ENCODE measurements at regions of chr19 and their contacts with region 1.

Region 1: GRCh38 chr19:40542202-40542859 is 34.3 kb upstream of the SHKBP1 start:
- H3K4me3 Mint-ChIP-seq: no peak overlapping the region
- H3K27ac Mint-ChIP-seq: no peak overlapping the region
- H3K4me1 Mint-ChIP-seq: no peaks in the 10 kb centered on the region
- H3K27me3 Mint-ChIP-seq: peaks cover 47% of the 10 kb centered on the region

Region 2: GRCh38 chr19:40523322-40524047 is 18.8 kb before region 1 on chr19:
- intact Hi-C with region 1: no loop called
- H3K4me3 Mint-ChIP-seq: no peak overlapping the region
- H3K27ac Mint-ChIP-seq: no peak overlapping the region
- H3K4me1 Mint-ChIP-seq: peaks cover 5% of the 10 kb centered on the region
- H3K27me3 Mint-ChIP-seq: peaks cover 59% of the 10 kb centered on the region

Region 3: GRCh38 chr19:40598121-40598917 is 56.0 kb after region 1 on chr19:
- intact Hi-C with region 1: loop called (anchors 1 kb)
- H3K4me3 Mint-ChIP-seq: no peak overlapping the region
- H3K27ac Mint-ChIP-seq: no peak overlapping the region
- H3K4me1 Mint-ChIP-seq: peaks cover 57% of the 10 kb centered on the region
- H3K27me3 Mint-ChIP-seq: peaks cover 85% of the 10 kb centered on the region

Measured in dendritic cell treated with granulocyte-macrophage colony-stimulating factor and Interleukin-4, amounts not matched to agents 40 ng/mL and 50 ng/mL, for 4 days (primary cell).